Mammary epithelial cell (primary cell): ENCODE measurements at regions of chr15 and their contacts with region 1.

Region 1: GRCh38 chr15:43903864-43904290 is 77.1 kb downstream of the WDR76 start:
- DNase-seq: peak; percentile 36
- H3K4me3 ChIP-seq: no peak overlapping the region
- H3K27ac ChIP-seq: no peak overlapping the region
- H3K4me1 ChIP-seq: no peaks in the 10 kb centered on the region
- H3K27me3 ChIP-seq: no peaks in the 10 kb centered on the region
- CTCF ChIP-seq: peak; percentile 67 to 84

Region 2: GRCh38 chr15:43854801-43855200 is 49.1 kb before region 1 on chr15:
- CTCF ChIA-PET with region 1: no interaction called
- dilution Hi-C with region 1: no loop called
- in situ Hi-C with region 1: no loop called
- intact Hi-C with region 1: no loop called
- DNase-seq: no peak
- H3K4me3 ChIP-seq: no peak overlapping the region
- H3K27ac ChIP-seq: no peak overlapping the region
- H3K4me1 ChIP-seq: no peaks in the 10 kb centered on the region
- H3K27me3 ChIP-seq: no peaks in the 10 kb centered on the region
- CTCF ChIP-seq: no peak

Region 3: GRCh38 chr15:44058126-44058525 is 154.2 kb after region 1 on chr15:
- CTCF ChIA-PET with region 1: no interaction called
- dilution Hi-C with region 1: loop called (anchors 10 kb)
- in situ Hi-C with region 1: loop called in 1 of 2 experiments (anchors 25 kb)
- intact Hi-C with region 1: no loop called
- DNase-seq: no peak
- H3K4me3 ChIP-seq: no peak overlapping the region
- H3K27ac ChIP-seq: no peak overlapping the region
- H3K4me1 ChIP-seq: no peaks in the 10 kb centered on the region
- H3K27me3 ChIP-seq: no peaks in the 10 kb centered on the region
- CTCF ChIP-seq: no peak

Region 4: GRCh38 chr15:44130778-44131177 is 226.9 kb after region 1 on chr15:
- CTCF ChIA-PET with region 1: no interaction called
- dilution Hi-C with region 1: no loop called
- in situ Hi-C with region 1: no loop called
- intact Hi-C with region 1: loop called (anchors 1 kb)
- DNase-seq: no peak
- H3K4me3 ChIP-seq: no peak overlapping the region
- H3K27ac ChIP-seq: no peak overlapping the region
- H3K4me1 ChIP-seq: no peaks in the 10 kb centered on the region
- H3K27me3 ChIP-seq: no peaks in the 10 kb centered on the region
- CTCF ChIP-seq: peak in 1 of 2 donors; percentile 22

Region 5: DNA sequence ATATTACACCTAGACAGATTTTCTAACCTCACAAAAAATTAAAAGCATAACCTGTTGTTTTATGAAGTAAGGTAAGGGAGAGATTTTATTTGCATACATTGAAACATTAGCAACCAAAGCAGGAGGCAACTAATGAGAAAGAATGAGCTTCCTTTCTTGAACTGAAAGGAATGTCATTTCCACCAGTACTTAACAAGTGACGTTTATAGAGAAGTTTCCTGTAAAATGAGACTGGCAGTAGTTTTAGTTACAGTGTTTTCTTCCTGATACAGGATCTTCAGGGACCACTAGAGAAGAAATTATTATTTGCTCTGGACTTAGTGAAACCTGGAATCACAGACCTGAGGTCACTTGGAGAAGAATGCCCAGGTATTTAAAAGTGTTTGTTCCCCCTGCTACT is 318.6 kb after region 1 on chr15:
- CTCF ChIA-PET with region 1: no interaction called
- dilution Hi-C with region 1: loop called (anchors 5 kb)
- in situ Hi-C with region 1: loop called (anchors 5 to 10 kb)
- intact Hi-C with region 1: loop called (anchors 1 kb)
- DNase-seq: no peak
- H3K4me3 ChIP-seq: no peak overlapping the region
- H3K27ac ChIP-seq: no peak overlapping the region
- H3K4me1 ChIP-seq: peaks cover 4% of the 10 kb centered on the region
- H3K27me3 ChIP-seq: no peaks in the 10 kb centered on the region
- CTCF ChIP-seq: no peak